AG04450 (cell line): ENCODE measurements at regions of chr4 and their contacts with region 1.

Region 1: GRCh38 chr4:183600189-183600685 is 58.7 kb downstream of the RWDD4 start:
- DNase-seq: no peak
- H3K4me3 ChIP-seq: no peak overlapping the region
- H3K27ac ChIP-seq: no peak overlapping the region
- H3K27me3 ChIP-seq: no peaks in the 10 kb centered on the region
- CTCF ChIP-seq: peak; percentile 62

Region 2: GRCh38 chr4:183471946-183472708 is 128.1 kb before region 1 on chr4:
- CTCF ChIA-PET with region 1: interaction called, 17 read pairs
- POLR2A ChIA-PET with region 1: no interaction called
- DNase-seq: peak; percentile 43
- H3K4me3 ChIP-seq: no peak overlapping the region
- H3K27ac ChIP-seq: no peak overlapping the region
- H3K27me3 ChIP-seq: no peaks in the 10 kb centered on the region
- CTCF ChIP-seq: peak; percentile 84

Region 3: DNA sequence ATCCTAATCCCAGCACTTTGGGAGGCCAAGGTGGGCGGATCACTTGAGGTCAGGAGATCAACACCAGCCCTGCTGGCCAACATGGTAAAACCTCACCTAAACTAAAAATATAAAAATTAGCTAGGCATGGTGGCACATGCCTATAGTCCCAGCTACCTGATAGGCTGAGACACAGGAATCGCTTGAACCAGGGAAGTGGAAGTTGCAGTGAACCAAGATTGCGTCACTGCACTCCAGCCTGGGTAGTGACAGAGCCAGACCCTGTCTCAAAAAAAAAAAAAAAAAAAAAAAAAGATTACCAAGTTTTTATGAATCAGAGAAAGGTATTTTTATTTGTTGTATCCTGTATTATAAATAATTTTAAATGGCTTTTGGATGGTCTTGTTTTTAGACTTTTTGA is 73.9 kb after region 1 on chr4:
- CTCF ChIA-PET with region 1: no interaction called
- POLR2A ChIA-PET with region 1: no interaction called
- DNase-seq: no peak
- H3K4me3 ChIP-seq: no peak overlapping the region
- H3K27ac ChIP-seq: no peak overlapping the region
- H3K27me3 ChIP-seq: no peaks in the 10 kb centered on the region
- CTCF ChIP-seq: no peak